Stomach (tissue), 19 donors: ENCODE measurements at regions of chr1 and their contacts with region 1.

Region 1: GRCh38 chr1:42913426-42914091 is 45.1 kb downstream of the SLC2A1 start:
- DNase-seq: peak; percentile 52 to 89
- H3K4me3 ChIP-seq: no peak overlapping the region
- H3K27ac ChIP-seq: no peak overlapping the region
- H3K4me1 ChIP-seq: no peaks in the 10 kb centered on the region
- H3K27me3 ChIP-seq: no peaks in the 10 kb centered on the region
- CTCF ChIP-seq: peak in 6 of 7 experiments; percentile 52 to 94 (median 82)
- EP300 ChIP-seq: no peak
- POLR2A ChIP-seq: no peak

Region 2: DNA sequence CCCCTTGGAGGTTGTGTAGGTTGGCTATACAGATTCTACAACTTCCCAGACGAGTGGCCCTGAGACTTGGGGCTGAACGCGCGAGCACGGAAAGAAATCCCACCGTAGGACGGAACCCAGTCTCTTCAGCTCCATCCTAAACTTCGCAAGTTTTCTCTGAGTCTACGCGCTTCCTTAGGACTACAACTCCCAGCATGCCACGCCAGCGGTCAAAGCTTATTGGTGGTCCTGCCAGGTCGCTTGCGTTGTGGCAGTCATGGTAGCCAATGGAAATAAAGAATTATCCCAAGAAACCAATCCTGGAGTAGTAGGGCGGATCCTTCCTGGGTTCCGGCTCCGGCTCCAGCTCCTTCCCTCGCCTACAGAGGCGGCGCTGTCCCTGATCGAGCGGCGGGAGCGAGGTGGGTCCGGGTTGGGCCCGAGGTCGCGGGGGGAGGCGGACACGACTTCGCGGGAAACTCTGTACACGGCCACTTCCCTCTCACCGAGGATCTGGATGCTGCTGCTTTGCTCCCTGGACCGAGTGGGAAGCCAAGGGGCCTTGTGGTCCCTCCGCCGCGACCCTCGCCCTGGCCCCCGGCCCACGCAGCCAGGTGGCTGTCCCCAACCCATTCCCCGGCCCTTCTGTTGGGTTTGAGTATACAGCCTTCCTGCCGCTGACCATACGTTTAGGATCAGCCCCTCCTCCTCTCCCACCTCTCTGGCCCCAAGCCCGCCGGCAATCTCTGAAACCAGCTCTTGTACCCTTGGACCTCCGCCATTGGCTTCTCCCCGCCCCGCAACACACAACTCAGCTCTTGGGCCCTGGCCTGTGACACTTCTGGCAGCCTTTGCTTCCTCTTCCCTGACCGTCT is 67.1 kb before region 1 on chr1 and contains the start of gene ZNF691:
- intact Hi-C with region 1: no loop called
- DNase-seq: peak; percentile 94 to 98
- H3K4me3 ChIP-seq: peak within 1 kb of the TSS; percentile 71 to 94 (median 90)
- H3K27ac ChIP-seq: peak within 1 kb of the TSS; percentile 74 to 91 (median 86)
- H3K4me1 ChIP-seq: peaks cover 9 to 34% (median 24%) of the 10 kb centered on the region in 4 donors
- H3K27me3 ChIP-seq: no peaks in the 10 kb centered on the region
- CTCF ChIP-seq: peak in 4 of 7 experiments; percentile 12 to 59 (median 30)
- EP300 ChIP-seq: no peak
- POLR2A ChIP-seq: peak in 1 of 4 donors; percentile 52
- total RNA-seq, gene ZNF691: 1.2 to 12.8 (median 4.2) TPM

Region 3: DNA sequence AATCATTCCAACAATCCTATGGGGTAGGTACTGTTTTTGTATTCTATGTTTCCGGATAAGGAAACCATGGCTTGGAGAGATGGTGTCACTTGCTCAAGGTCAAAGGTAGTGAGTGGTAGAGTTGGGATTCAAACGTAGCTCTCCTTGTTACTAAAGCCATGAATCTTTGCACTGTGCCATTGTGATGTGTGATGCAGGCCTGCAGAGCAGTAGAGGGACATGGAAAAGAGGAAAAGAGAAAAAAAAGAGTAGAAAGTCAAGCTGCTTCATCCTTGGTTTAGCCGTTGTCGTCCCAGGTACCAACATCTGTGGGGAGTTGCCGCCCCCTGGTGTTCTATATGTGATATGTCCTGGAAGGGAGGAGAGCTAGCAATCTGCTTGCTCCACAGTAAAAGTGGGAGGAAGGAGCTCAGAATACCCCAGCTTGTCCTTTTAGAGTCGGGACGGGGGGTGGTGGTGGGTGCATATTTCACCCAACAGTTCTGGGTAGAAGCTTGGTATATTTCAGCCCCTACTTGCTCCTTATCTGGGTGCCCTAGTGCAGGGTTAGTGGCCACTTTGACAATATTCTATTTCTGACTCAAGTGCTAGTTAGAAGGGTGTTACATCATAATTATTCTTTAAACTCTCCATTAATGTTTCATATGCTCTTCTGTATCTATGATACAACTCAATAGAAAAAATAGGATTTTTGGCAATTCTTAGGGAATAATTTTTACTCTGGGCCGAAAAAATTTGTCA is 160.1 kb after region 1 on chr1:
- intact Hi-C with region 1: loop called (anchors 2 kb)
- DNase-seq: peak; percentile 82 to 94
- H3K4me3 ChIP-seq: no peak overlapping the region
- H3K27ac ChIP-seq: peak overlapping the region in 1 of 5 donors; percentile 21
- H3K4me1 ChIP-seq: peaks cover 8 to 27% (median 17%) of the 10 kb centered on the region in 4 donors
- H3K27me3 ChIP-seq: no peaks in the 10 kb centered on the region
- CTCF ChIP-seq: peak in 5 of 7 experiments; percentile 68 to 95 (median 89)
- EP300 ChIP-seq: no peak
- POLR2A ChIP-seq: no peak

Region 4: DNA sequence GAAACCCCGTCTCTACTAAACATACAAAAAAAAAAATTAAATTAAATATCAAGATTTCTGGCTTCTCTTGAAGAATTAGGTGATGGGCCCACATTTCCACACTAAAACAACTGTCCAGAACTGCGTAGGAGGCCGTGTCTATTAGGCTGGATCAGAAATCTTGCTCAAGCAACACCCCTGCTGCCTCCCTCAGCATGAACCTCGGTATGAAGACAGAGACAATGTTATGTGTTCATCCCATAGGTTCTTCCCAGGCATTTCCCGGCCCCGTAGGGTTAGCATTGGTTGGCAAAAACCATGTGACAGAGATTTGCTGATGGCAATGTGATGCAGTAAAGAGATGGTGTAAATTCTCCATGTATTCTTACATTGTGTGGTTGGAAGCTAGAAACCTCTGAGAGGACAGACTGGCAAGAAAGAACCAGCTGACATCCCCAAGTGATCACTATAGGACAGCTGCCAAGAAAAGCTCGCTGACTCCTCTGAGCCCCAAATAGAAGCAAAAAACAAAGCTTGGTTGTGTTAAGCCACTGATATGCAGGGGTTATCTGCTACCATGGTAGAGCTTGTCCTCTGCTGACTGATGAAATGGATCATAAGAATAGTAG is 224.0 kb after region 1 on chr1:
- intact Hi-C with region 1: no loop called
- DNase-seq: no peak
- H3K4me3 ChIP-seq: no peak overlapping the region
- H3K27ac ChIP-seq: no peak overlapping the region
- H3K4me1 ChIP-seq: peaks cover 0 to 4% (median 0%) of the 10 kb centered on the region in 4 donors
- H3K27me3 ChIP-seq: peaks cover 0 to 4% (median 0%) of the 10 kb centered on the region in 3 donors
- CTCF ChIP-seq: no peak
- EP300 ChIP-seq: no peak
- POLR2A ChIP-seq: no peak